ENCODE measurements at regions of chr3 and their contacts with region 1.

Region 1: DNA sequence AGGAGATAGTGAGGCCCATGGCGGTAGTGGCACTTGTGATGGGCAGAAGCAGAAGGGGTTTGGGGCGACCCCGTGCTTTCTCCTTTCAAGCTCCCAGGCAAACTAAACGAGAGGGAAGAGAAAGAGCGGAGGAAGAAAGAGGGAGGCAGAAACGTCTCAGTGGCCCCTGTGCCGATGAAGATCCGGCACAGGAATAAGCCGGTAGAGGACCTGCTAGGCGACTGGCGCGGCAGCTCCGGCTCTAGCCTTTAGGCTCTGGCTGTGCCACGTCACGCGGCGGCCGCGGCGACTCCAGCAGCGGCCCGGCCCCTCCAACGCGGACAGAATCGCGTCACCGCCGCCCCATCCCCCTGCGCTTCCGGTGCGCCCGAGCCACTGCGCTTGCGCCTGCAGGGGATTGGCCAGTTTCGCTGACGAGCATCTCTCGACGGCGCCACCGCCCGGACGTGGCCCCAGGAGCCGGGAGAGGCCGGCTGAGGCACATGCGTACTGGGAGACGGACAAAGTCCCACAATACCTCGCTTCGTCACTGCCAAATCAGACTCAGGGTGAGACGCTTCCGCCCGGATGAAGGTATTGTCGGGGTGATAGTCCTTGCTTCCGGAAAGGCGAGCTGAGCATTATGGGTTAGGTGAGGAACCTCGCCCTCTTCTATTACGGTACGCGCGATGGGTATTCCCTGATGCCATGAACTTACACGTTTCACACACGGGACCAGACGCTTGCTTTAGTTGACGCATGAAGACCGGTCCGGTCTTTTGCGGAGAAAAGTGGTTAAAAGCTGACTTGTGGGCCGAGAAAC is at the start of gene ARF4:
- DNase-seq: peak; percentile 99
- total RNA-seq, gene ARF4: 103 TPM

Region 2: DNA sequence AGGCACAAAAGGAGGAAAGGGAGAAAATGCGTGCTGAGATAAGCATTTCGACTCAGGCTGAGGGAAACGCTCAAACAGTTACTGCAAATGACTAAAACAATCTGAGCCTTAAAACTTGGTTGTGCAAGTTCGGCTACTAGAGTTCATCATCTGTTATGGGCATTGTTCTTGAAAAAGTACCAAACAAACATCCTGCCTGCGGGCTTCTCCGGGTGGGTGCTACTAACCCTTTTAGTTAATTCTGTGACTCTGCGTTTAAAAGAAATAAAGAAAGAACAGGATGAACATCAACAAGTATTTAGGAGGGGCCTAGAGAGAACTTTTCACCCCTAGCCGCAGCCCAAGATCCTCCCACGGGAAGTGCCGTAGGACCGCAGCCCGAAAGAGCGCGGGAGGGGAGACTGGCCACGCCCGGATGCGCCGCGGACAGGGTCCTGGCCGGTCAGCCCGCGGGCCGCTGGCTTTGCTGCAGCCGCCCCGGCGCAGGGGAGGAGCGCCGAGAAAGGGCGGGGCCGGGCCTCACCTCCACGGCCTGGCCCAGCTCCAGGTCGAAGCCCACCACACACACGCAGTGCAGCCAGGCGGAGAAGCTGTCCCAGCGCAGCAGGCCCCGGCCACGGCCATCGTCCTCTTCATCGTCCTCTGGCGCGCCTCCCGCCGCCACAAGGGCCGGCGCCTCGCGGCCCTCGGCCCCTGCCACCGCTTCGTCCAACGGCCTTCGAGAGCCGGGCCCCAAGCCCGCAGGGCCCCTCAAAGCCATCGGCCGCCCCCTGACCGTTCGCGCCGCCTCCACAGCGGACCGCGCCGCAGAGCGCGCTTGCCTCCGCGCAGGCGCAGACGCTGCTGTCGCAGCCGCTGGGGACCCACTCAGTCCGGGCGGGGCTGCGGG is 95.2 kb after region 1 on chr3 and contains the start of gene DENND6A:
- intact Hi-C with region 1: loop called (anchors 1 kb)
- DNase-seq: peak; percentile 98
- total RNA-seq, gene DENND6A: 22.1 TPM

Region 3: DNA sequence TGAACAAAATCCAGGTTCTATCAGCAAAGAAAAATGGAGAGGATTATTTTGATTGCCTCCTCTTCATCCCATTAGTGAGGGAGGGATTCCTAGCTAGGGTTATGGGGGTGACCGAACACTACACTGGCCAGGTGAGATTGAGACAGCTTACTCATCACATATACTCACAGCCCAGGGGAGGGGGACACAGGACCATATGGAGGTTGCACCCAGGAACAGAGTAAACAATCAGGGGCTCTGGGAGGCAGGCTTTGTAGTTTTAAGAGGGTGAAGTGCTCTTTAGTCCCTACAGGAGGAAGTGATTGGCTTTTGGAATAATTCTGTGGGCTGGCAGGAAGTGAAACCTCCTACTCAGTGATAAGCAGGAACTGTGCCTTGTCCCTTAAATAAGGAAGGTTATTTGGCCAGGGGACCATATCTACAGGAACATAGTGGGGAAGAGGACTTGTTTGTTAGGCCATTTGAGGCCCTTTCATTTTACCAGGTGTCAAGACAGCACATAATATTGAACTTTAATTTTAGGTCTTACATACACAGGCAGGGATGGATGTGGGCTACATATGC is 877.1 kb after region 1 on chr3:
- intact Hi-C with region 1: no loop called
- DNase-seq: no peak

Measured in cardiac septum (tissue), 1 donor.